Posterior vena cava (tissue), 2 donors: ENCODE measurements at regions of chr9 and their contacts with region 1.

Region 1: GRCh38 chr9:96758845-96759673 is 18.8 kb downstream of the ZNF510 start:
- DNase-seq: no peak

Region 2: GRCh38 chr9:96844040-96844439 is 85.0 kb after region 1 on chr9:
- intact Hi-C with region 1: loop called in 1 of 2 experiments (anchors 10 kb)
- DNase-seq: no peak